ENCODE measurements at regions of chr13 and their contacts with region 1.

Region 1: DNA sequence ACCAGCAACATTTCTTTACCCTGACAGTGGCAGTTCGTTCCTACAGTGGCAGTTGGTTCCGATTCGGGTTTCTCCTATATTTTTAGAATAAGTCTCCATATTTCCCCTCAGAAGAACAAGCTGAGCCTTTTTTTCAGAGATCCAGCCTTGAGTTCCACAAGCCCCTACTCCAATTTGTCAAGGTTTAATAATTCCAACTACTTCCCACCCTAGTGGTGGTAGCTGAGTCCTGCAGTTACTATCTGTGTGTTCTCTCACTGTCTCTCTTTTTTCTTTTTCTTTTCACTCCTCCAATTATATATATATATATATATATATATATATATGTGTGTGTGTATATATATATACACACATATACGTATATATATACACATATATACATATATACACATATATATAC is 1347.3 kb downstream of the PCDH9 start:
- DNase-seq: no peak
- H3K4me3 ChIP-seq: no peak overlapping the region
- H3K27ac ChIP-seq: no peak overlapping the region
- H3K4me1 ChIP-seq: no peaks in the 10 kb centered on the region
- H3K27me3 ChIP-seq: no peaks in the 10 kb centered on the region
- CTCF ChIP-seq: peak in 2 of 3 experiments; percentile 21 to 25; a peak in 2 of 4 replicates
- EP300 ChIP-seq: no peak
- POLR2A ChIP-seq: no peak
- RAD21 ChIP-seq: peak; percentile 24 to 27; a peak in 2 of 4 replicates

Region 2: GRCh38 chr13:65638572-65639168 is 244.1 kb before region 1 on chr13:
- CTCF ChIA-PET with region 1: interaction called, 10 read pairs
- POLR2A ChIA-PET with region 1: no interaction called
- DNase-seq: no peak
- H3K4me3 ChIP-seq: no peak overlapping the region; a peak in 1 of 8 replicates
- H3K27ac ChIP-seq: no peak overlapping the region
- H3K4me1 ChIP-seq: no peaks in the 10 kb centered on the region
- H3K27me3 ChIP-seq: no peaks in the 10 kb centered on the region
- CTCF ChIP-seq: peak in 2 of 3 experiments; percentile 56 to 74; a peak in 3 of 4 replicates
- EP300 ChIP-seq: no peak
- POLR2A ChIP-seq: no peak
- RAD21 ChIP-seq: peak; percentile 89

Region 3: DNA sequence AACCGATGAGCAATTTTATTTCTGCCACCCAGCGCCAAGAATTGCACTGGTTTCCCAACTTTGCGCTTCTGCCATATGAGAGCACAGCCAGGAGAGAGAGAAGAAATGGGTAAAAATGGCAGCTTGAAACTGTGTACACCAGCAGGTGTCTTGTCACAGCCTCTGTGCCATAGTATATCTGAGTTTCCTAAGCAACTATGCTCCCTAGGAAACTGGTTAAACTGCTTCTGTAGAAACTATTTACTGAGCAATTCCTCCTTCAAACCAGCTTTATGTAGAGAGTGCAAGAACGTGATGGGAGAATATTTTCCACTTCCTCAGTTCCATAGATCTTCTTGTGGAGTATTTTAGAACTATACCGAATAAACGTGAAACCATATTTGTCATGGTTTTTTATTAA is 13.9 kb before region 1 on chr13:
- CTCF ChIA-PET with region 1: interaction called, 18 read pairs
- POLR2A ChIA-PET with region 1: no interaction called
- DNase-seq: no peak
- H3K4me3 ChIP-seq: no peak overlapping the region
- H3K27ac ChIP-seq: no peak overlapping the region
- H3K4me1 ChIP-seq: no peaks in the 10 kb centered on the region
- H3K27me3 ChIP-seq: no peaks in the 10 kb centered on the region
- CTCF ChIP-seq: no peak
- EP300 ChIP-seq: no peak
- POLR2A ChIP-seq: no peak
- RAD21 ChIP-seq: no peak

Region 4: DNA sequence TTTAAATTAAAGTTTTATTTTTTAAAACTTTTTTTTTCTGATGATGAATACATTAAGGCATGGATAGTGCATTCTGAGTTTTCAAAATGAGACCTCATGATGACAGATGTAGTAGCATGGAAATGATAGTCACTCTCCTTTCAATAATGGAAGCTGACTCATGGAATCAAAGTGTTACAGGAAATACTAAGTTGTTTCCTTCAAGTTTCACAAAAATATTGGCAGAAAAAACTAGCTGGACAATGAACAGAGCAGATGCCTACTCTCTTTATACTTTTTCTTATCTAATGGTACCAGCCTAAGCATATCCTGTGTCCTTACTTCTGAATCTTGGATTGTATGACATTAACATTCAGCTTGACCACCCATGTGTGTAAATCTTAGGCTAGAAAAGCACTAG is 10.0 kb after region 1 on chr13:
- CTCF ChIA-PET with region 1: interaction called, 10 read pairs
- POLR2A ChIA-PET with region 1: no interaction called
- DNase-seq: no peak
- H3K4me3 ChIP-seq: no peak overlapping the region
- H3K27ac ChIP-seq: no peak overlapping the region
- H3K4me1 ChIP-seq: no peaks in the 10 kb centered on the region
- H3K27me3 ChIP-seq: no peaks in the 10 kb centered on the region
- CTCF ChIP-seq: no peak
- EP300 ChIP-seq: no peak
- POLR2A ChIP-seq: no peak
- RAD21 ChIP-seq: no peak

Measured in H1 (cell line).